ENCODE measurements at regions of chr3 and their contacts with region 1.

Region 1: GRCh38 chr3:158644345-158644908 is at the start of gene GFM1:
- DNase-seq: peak; percentile 94
- ATAC-seq: peak; percentile 97
- H3K4me3 Mint-ChIP-seq: peak within 1 kb of the TSS; percentile 92
- H3K27ac Mint-ChIP-seq: peak within 1 kb of the TSS; percentile 83
- H3K4me1 Mint-ChIP-seq: peaks cover 32% of the 10 kb centered on the region
- H3K27me3 Mint-ChIP-seq: no peaks in the 10 kb centered on the region
- total RNA-seq, gene GFM1: 50.5 to 51.4 TPM

Region 2: DNA sequence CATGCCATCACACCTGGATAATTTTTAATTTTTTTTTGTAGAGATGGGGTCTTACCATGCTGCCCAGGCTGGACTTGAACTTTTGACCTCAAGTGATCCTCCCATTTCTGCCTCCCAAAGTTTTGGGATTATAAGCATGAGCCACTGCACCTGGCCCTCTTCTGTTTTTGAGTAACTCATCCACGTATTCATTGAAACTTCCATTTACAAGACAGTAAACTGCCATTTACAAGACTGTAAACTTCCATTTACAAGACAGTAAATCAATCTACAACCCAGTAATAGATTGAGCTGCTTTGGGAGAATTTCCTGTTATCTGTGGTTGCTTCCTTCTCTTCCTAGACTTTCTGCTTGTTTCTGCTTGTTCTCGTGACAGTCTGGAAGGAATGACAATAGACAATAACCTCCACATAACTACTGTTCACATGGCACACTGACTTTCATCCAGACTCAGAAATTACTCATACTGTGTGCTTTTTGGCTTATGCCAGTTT is 1369.7 kb before region 1 on chr3:
- CTCF ChIA-PET with region 1: no interaction called
- POLR2A ChIA-PET with region 1: no interaction called
- intact Hi-C with region 1: no loop called
- DNase-seq: no peak
- ATAC-seq: no peak
- H3K4me3 Mint-ChIP-seq: no peak overlapping the region
- H3K27ac Mint-ChIP-seq: no peak overlapping the region
- H3K4me1 Mint-ChIP-seq: no peaks in the 10 kb centered on the region
- H3K27me3 Mint-ChIP-seq: no peaks in the 10 kb centered on the region

Region 3: GRCh38 chr3:157618075-157618760 is 1026.2 kb before region 1 on chr3:
- CTCF ChIA-PET with region 1: interaction called, 3 read pairs
- POLR2A ChIA-PET with region 1: no interaction called
- intact Hi-C with region 1: loop called in 1 of 2 experiments (anchors 2 kb)
- DNase-seq: peak; percentile 49
- ATAC-seq: peak; percentile 95
- H3K4me3 Mint-ChIP-seq: no peak overlapping the region
- H3K27ac Mint-ChIP-seq: no peak overlapping the region
- H3K4me1 Mint-ChIP-seq: peaks cover 9% of the 10 kb centered on the region
- H3K27me3 Mint-ChIP-seq: peaks cover 8% of the 10 kb centered on the region

Region 4: GRCh38 chr3:158539414-158540014 is 104.9 kb before region 1 on chr3:
- CTCF ChIA-PET with region 1: interaction called, 16 read pairs
- POLR2A ChIA-PET with region 1: no interaction called
- intact Hi-C with region 1: loop called (anchors 2 to 10 kb)
- DNase-seq: peak; percentile 65
- ATAC-seq: peak; percentile 57
- H3K4me3 Mint-ChIP-seq: no peak overlapping the region
- H3K27ac Mint-ChIP-seq: no peak overlapping the region
- H3K4me1 Mint-ChIP-seq: no peaks in the 10 kb centered on the region
- H3K27me3 Mint-ChIP-seq: no peaks in the 10 kb centered on the region

Region 5: DNA sequence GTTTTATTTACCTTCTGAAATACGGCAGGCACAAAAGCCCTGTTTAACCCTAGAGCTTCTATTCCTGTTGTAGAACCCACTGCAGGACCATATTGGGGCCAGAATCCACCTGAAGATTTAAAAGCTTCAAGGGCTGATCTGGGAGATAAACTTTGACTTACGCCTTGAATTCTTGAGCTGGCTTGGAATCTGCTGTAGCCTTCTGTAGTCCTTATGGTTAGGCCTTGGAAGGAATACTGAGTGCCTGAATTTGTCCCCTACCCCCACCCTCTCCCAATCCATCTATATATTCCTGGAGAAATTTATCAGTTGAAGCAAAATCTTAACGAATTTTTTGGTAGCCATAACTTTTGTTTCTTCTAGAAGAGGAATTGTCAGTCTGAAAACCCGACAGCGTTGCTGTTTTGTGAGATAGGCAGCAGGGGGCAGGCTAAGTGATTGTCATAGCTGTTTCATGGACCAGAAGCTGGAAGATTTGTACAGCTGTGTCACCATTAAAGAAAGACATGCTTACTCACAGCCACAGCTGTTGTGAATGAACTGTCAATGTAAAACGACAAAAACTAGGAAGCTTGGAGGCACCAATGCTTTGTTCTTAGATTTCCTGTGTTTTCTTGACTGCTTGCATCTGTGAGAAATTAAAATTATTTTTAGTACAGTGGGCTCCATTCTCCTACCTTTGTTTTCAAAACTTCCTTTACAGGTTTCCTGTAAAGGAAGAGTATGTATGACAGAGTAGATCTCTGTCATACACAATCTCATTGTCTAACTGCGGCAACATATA is 15.2 kb after region 1 on chr3:
- CTCF ChIA-PET with region 1: interaction called, 74 read pairs
- POLR2A ChIA-PET with region 1: interaction called, 3 read pairs
- intact Hi-C with region 1: loop called in 1 of 2 experiments (anchors 2 kb)
- DNase-seq: peak; percentile 76
- ATAC-seq: peak; percentile 97
- H3K4me3 Mint-ChIP-seq: no peak overlapping the region
- H3K27ac Mint-ChIP-seq: no peak overlapping the region
- H3K4me1 Mint-ChIP-seq: peaks cover 11% of the 10 kb centered on the region
- H3K27me3 Mint-ChIP-seq: no peaks in the 10 kb centered on the region

Region 6: GRCh38 chr3:158727206-158728060 is 83.0 kb after region 1 on chr3:
- CTCF ChIA-PET with region 1: interaction called, 6 read pairs
- POLR2A ChIA-PET with region 1: interaction called, 12 read pairs
- intact Hi-C with region 1: no loop called
- DNase-seq: peak; percentile 63
- ATAC-seq: no peak
- H3K4me3 Mint-ChIP-seq: no peak overlapping the region
- H3K27ac Mint-ChIP-seq: no peak overlapping the region
- H3K4me1 Mint-ChIP-seq: peaks cover 29% of the 10 kb centered on the region
- H3K27me3 Mint-ChIP-seq: peaks cover 3% of the 10 kb centered on the region

Region 7: GRCh38 chr3:159174715-159175692 is 530.6 kb after region 1 on chr3:
- CTCF ChIA-PET with region 1: no interaction called
- POLR2A ChIA-PET with region 1: no interaction called
- intact Hi-C with region 1: no loop called
- DNase-seq: no peak
- ATAC-seq: no peak
- H3K4me3 Mint-ChIP-seq: no peak overlapping the region
- H3K27ac Mint-ChIP-seq: no peak overlapping the region
- H3K4me1 Mint-ChIP-seq: no peaks in the 10 kb centered on the region
- H3K27me3 Mint-ChIP-seq: no peaks in the 10 kb centered on the region